OCI-LY7 (cell line): ENCODE measurements at regions of chr17 and their contacts with region 1.

Region 1: GRCh38 chr17:68491381-68492231 is 20.6 kb upstream of the PRKAR1A start:
- DNase-seq: peak; percentile 85
- H3K4me3 ChIP-seq: peak overlapping the region; percentile 19
- H3K27ac ChIP-seq: peak overlapping the region; percentile 75
- H3K4me1 ChIP-seq: peaks cover 56% of the 10 kb centered on the region
- CTCF ChIP-seq: no peak

Region 2: GRCh38 chr17:68512247-68512982 is 20.8 kb after region 1 on chr17 and contains the start of gene PRKAR1A:
- CTCF ChIA-PET with region 1: interaction called, 3 read pairs
- POLR2A ChIA-PET with region 1: interaction called, 81 read pairs
- intact Hi-C with region 1: loop called (anchors 2 kb)
- DNase-seq: peak; percentile 98
- H3K4me3 ChIP-seq: peak within 1 kb of the TSS; percentile 90
- H3K27ac ChIP-seq: peak within 1 kb of the TSS; percentile 65
- H3K4me1 ChIP-seq: peaks cover 48% of the 10 kb centered on the region
- CTCF ChIP-seq: no peak
- total RNA-seq, gene PRKAR1A: 158 and 228 TPM in 2 replicates

Region 3: DNA sequence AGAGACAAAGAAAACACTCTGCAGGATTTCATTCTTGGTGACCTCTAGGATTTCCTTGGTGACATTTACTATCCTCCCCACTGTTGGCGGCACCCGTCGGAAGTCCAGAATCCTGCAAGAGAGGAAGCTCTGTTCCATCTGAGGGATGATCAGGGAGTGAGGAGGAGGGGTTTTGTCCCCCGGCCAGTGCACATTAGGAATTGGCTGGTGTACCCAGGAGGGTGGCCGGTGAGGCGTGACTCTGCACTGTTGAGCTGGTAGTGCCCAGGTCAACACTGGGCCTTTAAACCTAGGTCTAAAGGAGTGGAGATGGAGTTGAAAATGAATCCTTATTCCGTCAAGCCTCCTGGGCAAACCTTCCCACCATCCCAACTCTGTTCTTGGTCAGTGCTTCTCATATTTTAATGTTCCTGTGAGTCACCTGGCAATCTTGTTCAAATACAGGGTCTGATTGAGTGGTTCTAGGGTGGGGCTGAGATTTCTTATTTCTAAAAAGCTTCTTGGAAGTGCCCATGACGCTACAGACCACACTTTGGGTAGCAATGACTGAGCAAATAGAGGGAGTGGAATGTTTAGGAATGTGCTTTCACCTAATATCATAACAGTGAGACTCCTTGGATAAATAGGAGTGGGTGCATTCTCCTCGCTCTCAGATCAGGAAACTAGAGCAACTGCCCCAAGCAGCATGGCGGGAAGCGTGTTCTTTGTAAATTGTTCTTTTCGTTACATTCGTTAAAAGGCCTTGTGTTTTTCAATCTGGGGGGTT is 51.3 kb after region 1 on chr17:
- CTCF ChIA-PET with region 1: no interaction called
- POLR2A ChIA-PET with region 1: no interaction called
- intact Hi-C with region 1: no loop called
- DNase-seq: no peak
- H3K4me3 ChIP-seq: no peak overlapping the region
- H3K27ac ChIP-seq: no peak overlapping the region
- H3K4me1 ChIP-seq: peaks cover 18% of the 10 kb centered on the region
- CTCF ChIP-seq: no peak